A549 (cell line): ENCODE measurements at regions of chr12 and their contacts with region 1.

Region 1: GRCh38 chr12:117671734-117672133 is 297.1 kb downstream of the KSR2 start:
- DNase-seq: peak; percentile 71 to 73
- ATAC-seq: peak; percentile 46 to 86; a peak in 4 of 6 replicates
- H3K4me3 ChIP-seq: no peak overlapping the region
- H3K27ac ChIP-seq: peak overlapping the region in 1 of 2 experiments; percentile 57; a peak in 2 of 6 replicates
- H3K4me1 ChIP-seq: 0 out of 3 replicates have a peak, but pooled peaks cover 3% of the 10 kb centered on the region
- CTCF ChIP-seq: peak; percentile 64
- EP300 ChIP-seq: no peak
- POLR2A ChIP-seq: no peak
- RAD21 ChIP-seq: peak; percentile 80 to 93

Region 2: GRCh38 chr12:117685110-117685926 is 13.6 kb after region 1 on chr12:
- CTCF ChIA-PET with region 1: interaction called, 28 read pairs
- POLR2A ChIA-PET with region 1: no interaction called
- DNase-seq: peak; percentile 95 to 96
- ATAC-seq: peak; percentile 88 to 91
- H3K4me3 ChIP-seq: no peak overlapping the region
- H3K27ac ChIP-seq: peak overlapping the region; percentile 94 to 96
- H3K4me1 ChIP-seq: peaks cover 69% of the 10 kb centered on the region
- CTCF ChIP-seq: no peak
- EP300 ChIP-seq: peak; percentile 72 to 85; a peak in 4 of 5 replicates
- POLR2A ChIP-seq: peak; percentile 16; the same call in 1 of the 2 replicates
- RAD21 ChIP-seq: peak; percentile 12 to 29; a peak in 3 of 5 replicates

Region 3: DNA sequence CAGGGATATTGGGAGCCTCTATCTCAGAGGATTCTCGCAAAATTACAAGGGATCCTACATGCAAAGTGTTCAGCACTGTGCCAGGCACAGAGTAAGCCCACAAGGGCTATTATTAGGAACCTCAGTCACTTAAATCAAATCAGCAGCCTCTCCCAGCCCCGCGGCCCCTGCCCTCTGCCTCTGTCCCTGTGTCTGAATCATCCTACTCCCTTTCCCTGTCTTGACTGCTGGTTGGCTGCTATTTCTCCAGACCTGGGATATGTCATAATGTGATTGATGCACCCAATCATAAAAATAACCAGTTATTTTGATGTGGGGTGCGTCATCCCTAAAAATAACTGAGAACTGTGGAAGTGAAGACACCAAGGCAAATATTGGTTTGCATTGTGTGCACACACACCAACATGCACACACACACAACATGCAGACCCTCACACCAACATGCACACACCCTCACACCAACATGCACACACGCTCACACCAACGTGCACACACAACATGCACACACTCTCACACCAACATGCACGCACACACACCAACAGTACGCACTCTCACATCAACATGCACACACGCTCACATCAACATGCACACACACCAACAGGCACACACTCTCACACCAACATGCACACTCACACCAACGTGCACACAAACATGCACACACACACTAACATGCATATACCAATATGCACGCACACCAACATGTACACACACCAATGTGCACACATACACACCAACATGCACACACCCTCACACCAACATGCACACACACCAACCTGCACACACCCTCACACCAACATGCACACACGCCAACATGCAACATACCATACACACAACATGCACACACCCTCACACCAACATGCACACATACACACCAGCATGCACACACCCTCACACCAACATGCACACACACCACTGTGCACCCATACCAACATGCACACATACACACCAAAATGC is 121.0 kb after region 1 on chr12:
- CTCF ChIA-PET with region 1: no interaction called
- POLR2A ChIA-PET with region 1: no interaction called
- DNase-seq: peak in 1 of 2 experiments; percentile 40
- ATAC-seq: peak; percentile 75 to 80; a peak in 5 of 6 replicates
- H3K4me3 ChIP-seq: no peak overlapping the region
- H3K27ac ChIP-seq: no peak overlapping the region
- H3K4me1 ChIP-seq: peaks cover 9% of the 10 kb centered on the region; the same call in 2 of the 3 replicates
- CTCF ChIP-seq: no peak
- EP300 ChIP-seq: no peak
- POLR2A ChIP-seq: no peak
- RAD21 ChIP-seq: no peak